ENCODE measurements at regions of chr9 and their contacts with region 1.

Region 1: GRCh38 chr9:85940832-85941621 is at the start of gene NAA35:
- DNase-seq: peak; percentile 97
- ATAC-seq: peak; percentile 87
- H3K4me3 Mint-ChIP-seq: peak within 1 kb of the TSS; percentile 84
- H3K27ac Mint-ChIP-seq: peak within 1 kb of the TSS; percentile 86
- H3K4me1 Mint-ChIP-seq: peaks cover 18% of the 10 kb centered on the region
- H3K27me3 Mint-ChIP-seq: peaks cover 4% of the 10 kb centered on the region
- CTCF ChIP-seq: no peak
- total RNA-seq, gene NAA35: 16.5 and 18.9 TPM in 2 replicates

Region 2: GRCh38 chr9:85610074-85610860 is 330.8 kb before region 1 on chr9:
- CTCF ChIA-PET with region 1: no interaction called
- POLR2A ChIA-PET with region 1: no interaction called
- intact Hi-C with region 1: loop called (anchors 5 kb)
- DNase-seq: no peak
- ATAC-seq: peak; percentile 88
- H3K4me3 Mint-ChIP-seq: peak overlapping the region; percentile 71
- H3K27ac Mint-ChIP-seq: peak overlapping the region; percentile 72
- H3K4me1 Mint-ChIP-seq: peaks cover 14% of the 10 kb centered on the region
- H3K27me3 Mint-ChIP-seq: no peaks in the 10 kb centered on the region
- CTCF ChIP-seq: peak; percentile 56

Region 3: GRCh38 chr9:86022687-86023266 is 81.8 kb after region 1 on chr9:
- CTCF ChIA-PET with region 1: no interaction called
- POLR2A ChIA-PET with region 1: no interaction called
- intact Hi-C with region 1: no loop called
- DNase-seq: no peak
- ATAC-seq: no peak
- H3K4me3 Mint-ChIP-seq: no peak overlapping the region
- H3K27ac Mint-ChIP-seq: no peak overlapping the region
- H3K4me1 Mint-ChIP-seq: no peaks in the 10 kb centered on the region
- H3K27me3 Mint-ChIP-seq: no peaks in the 10 kb centered on the region
- CTCF ChIP-seq: no peak

Region 4: DNA sequence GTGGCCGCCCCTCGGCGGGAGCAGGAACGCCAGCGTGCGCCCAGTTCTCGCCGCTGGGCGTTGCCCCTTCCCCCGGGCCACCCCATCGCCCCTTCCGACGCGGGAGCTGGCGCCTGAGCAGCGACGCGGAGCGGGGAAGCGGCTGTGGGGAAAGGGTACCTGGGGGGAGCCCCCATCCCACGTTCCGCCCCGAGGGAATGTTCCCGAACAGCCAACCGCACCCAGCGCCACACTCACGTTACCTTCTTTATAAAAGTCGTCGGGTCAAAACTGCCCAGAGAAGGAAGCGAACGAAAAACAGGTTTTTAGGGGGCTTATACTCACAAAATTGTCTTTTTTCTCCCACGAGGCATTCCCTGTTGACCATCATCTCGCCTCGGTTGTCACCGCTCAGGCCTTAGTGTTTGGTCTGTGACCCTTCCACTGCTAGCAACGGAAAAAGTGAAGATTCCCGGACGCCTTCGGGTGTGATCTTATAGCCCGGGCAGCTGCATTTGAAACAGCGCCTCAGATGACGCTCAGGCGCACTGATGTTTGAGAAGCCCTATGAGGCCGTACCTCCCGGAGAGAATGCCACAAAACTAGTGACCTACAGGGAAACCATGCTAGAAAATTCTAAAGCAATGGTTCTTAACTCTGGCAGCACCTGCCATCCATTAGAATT is 158.8 kb after region 1 on chr9:
- CTCF ChIA-PET with region 1: no interaction called
- POLR2A ChIA-PET with region 1: interaction called, 3 read pairs
- intact Hi-C with region 1: loop called (anchors 10 kb)
- DNase-seq: peak; percentile 22
- ATAC-seq: peak; percentile 31
- H3K4me3 Mint-ChIP-seq: peak overlapping the region; percentile 86
- H3K27ac Mint-ChIP-seq: no peak overlapping the region
- H3K4me1 Mint-ChIP-seq: peaks cover 7% of the 10 kb centered on the region
- H3K27me3 Mint-ChIP-seq: peaks cover 34% of the 10 kb centered on the region
- CTCF ChIP-seq: no peak

Region 5: GRCh38 chr9:86282077-86282978 is 341.3 kb after region 1 on chr9 and contains the start of gene ISCA1:
- CTCF ChIA-PET with region 1: no interaction called
- POLR2A ChIA-PET with region 1: interaction called, 4 read pairs
- intact Hi-C with region 1: loop called (anchors 1 kb)
- DNase-seq: peak; percentile 99
- ATAC-seq: peak; percentile 88
- H3K4me3 Mint-ChIP-seq: peak within 1 kb of the TSS; percentile 92
- H3K27ac Mint-ChIP-seq: peak within 1 kb of the TSS; percentile 93
- H3K4me1 Mint-ChIP-seq: peaks cover 35% of the 10 kb centered on the region
- H3K27me3 Mint-ChIP-seq: no peaks in the 10 kb centered on the region
- CTCF ChIP-seq: no peak
- total RNA-seq, gene ISCA1: 16.0 TPM in 2 replicates

Region 6: GRCh38 chr9:86354011-86354817 is 413.2 kb after region 1 on chr9 and contains the start of gene TUT7:
- CTCF ChIA-PET with region 1: no interaction called
- POLR2A ChIA-PET with region 1: no interaction called
- intact Hi-C with region 1: loop called (anchors 1 kb)
- DNase-seq: peak; percentile 98
- ATAC-seq: peak; percentile 88
- H3K4me3 Mint-ChIP-seq: peak within 1 kb of the TSS; percentile 93
- H3K27ac Mint-ChIP-seq: peak within 1 kb of the TSS; percentile 92
- H3K4me1 Mint-ChIP-seq: peaks cover 51% of the 10 kb centered on the region
- H3K27me3 Mint-ChIP-seq: no peaks in the 10 kb centered on the region
- CTCF ChIP-seq: no peak
- total RNA-seq, gene TUT7: 43.8 and 50.4 TPM in 2 replicates

Region 7: GRCh38 chr9:86948074-86948929 is 1007.3 kb after region 1 on chr9:
- CTCF ChIA-PET with region 1: no interaction called
- POLR2A ChIA-PET with region 1: no interaction called
- intact Hi-C with region 1: loop called (anchors 5 kb)
- DNase-seq: peak; percentile 42
- ATAC-seq: peak; percentile 72
- H3K4me3 Mint-ChIP-seq: peak overlapping the region; percentile 82
- H3K27ac Mint-ChIP-seq: no peak overlapping the region
- H3K4me1 Mint-ChIP-seq: peaks cover 19% of the 10 kb centered on the region
- H3K27me3 Mint-ChIP-seq: peaks cover 20% of the 10 kb centered on the region
- CTCF ChIP-seq: no peak